Pancreas (tissue), 10 donors: ENCODE measurements at regions of chr14 and their contacts with region 1.

Region 1: GRCh38 chr14:24710403-24711112 is 76.6 kb upstream of the GZMB start:
- DNase-seq: peak in 4 of 6 donors; percentile 19 to 63 (median 49)
- ATAC-seq: peak in 3 of 4 donors; percentile 85 to 89 (median 88)
- H3K4me3 ChIP-seq: no peak overlapping the region
- H3K27ac ChIP-seq: no peak overlapping the region
- H3K4me1 ChIP-seq: no peaks in the 10 kb centered on the region
- H3K27me3 ChIP-seq: peaks cover 0 to 3% (median 0%) of the 10 kb centered on the region in 4 donors
- CTCF ChIP-seq: peak; percentile 58 to 83 (median 73)

Region 2: GRCh38 chr14:24556756-24557155 is 153.8 kb before region 1 on chr14:
- intact Hi-C with region 1: no loop called
- DNase-seq: no peak
- ATAC-seq: peak in 2 of 4 donors; percentile 47
- H3K4me3 ChIP-seq: no peak overlapping the region
- H3K27ac ChIP-seq: no peak overlapping the region
- H3K4me1 ChIP-seq: no peaks in the 10 kb centered on the region
- H3K27me3 ChIP-seq: no peaks in the 10 kb centered on the region
- CTCF ChIP-seq: no peak

Region 3: GRCh38 chr14:25069879-25070278 is 359.3 kb after region 1 on chr14:
- intact Hi-C with region 1: no loop called
- DNase-seq: no peak
- ATAC-seq: no peak
- H3K4me3 ChIP-seq: no peak overlapping the region
- H3K27ac ChIP-seq: no peak overlapping the region
- H3K4me1 ChIP-seq: no peaks in the 10 kb centered on the region
- H3K27me3 ChIP-seq: no peaks in the 10 kb centered on the region
- CTCF ChIP-seq: no peak

Region 4: GRCh38 chr14:25400607-25401206 is 690.1 kb after region 1 on chr14:
- intact Hi-C with region 1: loop called in 1 of 3 experiments (anchors 10 kb)
- DNase-seq: peak in 2 of 6 donors; percentile 17 to 34
- ATAC-seq: peak in 3 of 4 donors; percentile 70 to 89 (median 77)
- H3K4me3 ChIP-seq: no peak overlapping the region
- H3K27ac ChIP-seq: no peak overlapping the region
- H3K4me1 ChIP-seq: no peaks in the 10 kb centered on the region
- H3K27me3 ChIP-seq: peaks cover 0 to 6% (median 0%) of the 10 kb centered on the region in 4 donors
- CTCF ChIP-seq: peak; percentile 51 to 67 (median 58)